ENCODE measurements at regions of chr1 and their contacts with region 1.

Region 1: DNA sequence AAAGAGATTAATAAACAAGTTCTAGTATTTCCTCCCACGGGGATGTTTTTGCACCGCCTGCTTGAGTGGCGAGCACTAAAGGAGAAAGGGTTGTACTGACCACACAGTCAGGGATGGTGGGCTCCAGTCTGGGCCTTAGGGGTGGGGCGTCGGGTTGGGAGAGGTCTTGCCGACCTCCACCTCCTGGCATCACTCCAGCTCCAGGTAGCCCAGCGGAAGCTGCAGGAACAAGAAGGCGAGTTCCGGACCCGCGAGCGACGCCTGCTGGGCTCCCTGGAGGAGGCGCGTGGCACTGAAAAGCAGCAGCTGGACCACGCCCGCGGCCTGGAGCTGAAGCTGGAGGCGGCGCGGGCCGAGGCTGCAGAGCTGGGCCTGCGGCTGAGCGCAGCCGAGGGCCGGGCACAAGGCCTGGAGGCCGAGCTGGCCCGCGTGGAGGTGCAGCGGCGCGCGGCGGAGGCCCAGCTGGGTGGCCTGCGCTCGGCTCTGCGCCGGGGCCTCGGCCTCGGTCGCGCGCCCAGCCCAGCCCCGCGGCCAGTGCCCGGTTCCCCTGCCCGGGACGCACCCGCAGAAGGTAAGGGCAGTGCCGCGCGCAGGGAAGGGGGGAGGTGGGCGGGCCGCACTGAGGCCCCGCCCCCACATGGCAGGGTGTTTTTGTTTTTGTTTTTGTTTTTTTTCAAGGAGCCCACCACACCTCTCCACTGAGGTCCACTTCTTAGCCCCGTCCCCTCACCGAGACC is 19.7 kb downstream of the MFAP2 start:
- DNase-seq: peak; percentile 92 to 96
- ATAC-seq: peak; percentile 79
- H3K4me3 ChIP-seq: peak overlapping the region in 1 of 2 donors; percentile 18
- H3K27ac ChIP-seq: peak overlapping the region in 1 of 2 donors; percentile 15
- H3K4me1 ChIP-seq: no peaks in the 10 kb centered on the region
- H3K27me3 ChIP-seq: no peaks in the 10 kb centered on the region

Region 2: GRCh38 chr1:16921391-16922185 is 39.1 kb before region 1 on chr1 and contains the start of gene CROCC:
- intact Hi-C with region 1: loop called in 1 of 2 experiments (anchors 2 kb)
- DNase-seq: peak; percentile 45 to 78
- ATAC-seq: no peak
- H3K4me3 ChIP-seq: no peak within 1 kb of the TSS
- H3K27ac ChIP-seq: no peak within 1 kb of the TSS
- H3K4me1 ChIP-seq: no peaks in the 10 kb centered on the region
- H3K27me3 ChIP-seq: no peaks in the 10 kb centered on the region
- total RNA-seq, gene CROCC: 18.6 to 34.1 TPM

Region 3: GRCh38 chr1:17125756-17126237 is 165.1 kb after region 1 on chr1:
- intact Hi-C with region 1: loop called in 1 of 2 experiments (anchors 5 kb)
- DNase-seq: peak; percentile 92 to 97
- ATAC-seq: peak; percentile 91
- H3K4me3 ChIP-seq: no peak overlapping the region
- H3K27ac ChIP-seq: no peak overlapping the region
- H3K4me1 ChIP-seq: no peaks in the 10 kb centered on the region
- H3K27me3 ChIP-seq: no peaks in the 10 kb centered on the region

Region 4: GRCh38 chr1:17207966-17208418 is 247.3 kb after region 1 on chr1:
- intact Hi-C with region 1: no loop called
- DNase-seq: no peak
- ATAC-seq: no peak
- H3K4me3 ChIP-seq: no peak overlapping the region
- H3K27ac ChIP-seq: no peak overlapping the region
- H3K4me1 ChIP-seq: no peaks in the 10 kb centered on the region
- H3K27me3 ChIP-seq: no peaks in the 10 kb centered on the region

Region 5: GRCh38 chr1:17236779-17237560 is 276.2 kb after region 1 on chr1:
- intact Hi-C with region 1: loop called in 1 of 2 experiments (anchors 10 kb)
- DNase-seq: peak; percentile 91 to 96
- ATAC-seq: peak; percentile 70
- H3K4me3 ChIP-seq: no peak overlapping the region
- H3K27ac ChIP-seq: no peak overlapping the region
- H3K4me1 ChIP-seq: no peaks in the 10 kb centered on the region
- H3K27me3 ChIP-seq: no peaks in the 10 kb centered on the region

Region 6: DNA sequence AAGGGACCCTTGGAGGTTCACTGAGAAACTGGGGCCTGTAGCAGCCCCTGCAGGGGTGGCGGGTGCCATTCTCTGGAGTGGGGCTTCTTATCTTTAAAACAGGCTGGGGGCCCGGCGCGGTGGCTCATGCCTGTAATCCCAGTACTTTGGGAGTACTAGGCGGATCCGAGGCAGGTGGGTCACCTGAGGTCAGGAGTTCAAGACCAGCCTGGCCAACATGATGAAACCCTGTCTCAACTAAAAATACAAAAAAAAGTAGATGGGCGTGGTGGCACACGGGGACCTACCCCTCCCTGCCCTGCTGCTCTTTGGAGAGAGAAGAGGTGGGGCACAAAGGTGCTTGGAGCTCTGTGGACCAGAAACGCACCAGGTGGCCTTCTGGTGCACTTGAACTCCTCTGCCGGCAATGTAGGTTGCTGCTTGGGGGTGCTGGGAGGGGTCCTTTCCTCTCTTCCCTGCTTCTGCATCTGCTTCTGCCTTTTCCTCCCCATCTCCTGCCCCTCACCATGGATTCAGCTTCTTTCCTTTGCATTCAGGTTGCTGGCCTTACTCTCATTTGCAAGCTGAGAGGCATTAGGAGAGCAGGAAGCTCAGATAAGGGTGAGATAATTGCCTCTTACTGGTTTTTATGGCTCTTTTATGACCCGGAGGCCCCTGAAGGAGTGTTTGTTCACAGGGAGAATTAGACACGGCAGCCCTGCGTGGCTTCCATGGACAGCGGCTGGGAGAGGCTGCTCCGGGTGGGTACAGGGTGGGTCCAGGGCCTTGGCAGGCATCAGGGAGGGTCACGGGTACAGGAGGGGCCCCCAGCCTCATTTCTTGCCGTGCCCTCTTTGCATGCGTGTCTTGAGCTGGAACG is 636.2 kb after region 1 on chr1:
- intact Hi-C with region 1: loop called in 1 of 2 experiments (anchors 10 kb)
- DNase-seq: no peak
- ATAC-seq: no peak
- H3K4me3 ChIP-seq: no peak overlapping the region
- H3K27ac ChIP-seq: peak overlapping the region in 1 of 2 donors; percentile 65
- H3K4me1 ChIP-seq: peaks cover 0 to 2% of the 10 kb centered on the region in 2 donors
- H3K27me3 ChIP-seq: no peaks in the 10 kb centered on the region

Measured in aorta (tissue), 5 donors.